ENCODE measurements at regions of chr11 and their contacts with region 1.

Region 1: GRCh38 chr11:125022551-125022950 is 40.6 kb upstream of the SLC37A2 start:
- DNase-seq: no peak
- ATAC-seq: no peak
- H3K4me3 ChIP-seq: no peak overlapping the region
- H3K27ac ChIP-seq: no peak overlapping the region
- H3K4me1 ChIP-seq: no peaks in the 10 kb centered on the region
- H3K27me3 ChIP-seq: no peaks in the 10 kb centered on the region
- CTCF ChIP-seq: no peak

Region 2: DNA sequence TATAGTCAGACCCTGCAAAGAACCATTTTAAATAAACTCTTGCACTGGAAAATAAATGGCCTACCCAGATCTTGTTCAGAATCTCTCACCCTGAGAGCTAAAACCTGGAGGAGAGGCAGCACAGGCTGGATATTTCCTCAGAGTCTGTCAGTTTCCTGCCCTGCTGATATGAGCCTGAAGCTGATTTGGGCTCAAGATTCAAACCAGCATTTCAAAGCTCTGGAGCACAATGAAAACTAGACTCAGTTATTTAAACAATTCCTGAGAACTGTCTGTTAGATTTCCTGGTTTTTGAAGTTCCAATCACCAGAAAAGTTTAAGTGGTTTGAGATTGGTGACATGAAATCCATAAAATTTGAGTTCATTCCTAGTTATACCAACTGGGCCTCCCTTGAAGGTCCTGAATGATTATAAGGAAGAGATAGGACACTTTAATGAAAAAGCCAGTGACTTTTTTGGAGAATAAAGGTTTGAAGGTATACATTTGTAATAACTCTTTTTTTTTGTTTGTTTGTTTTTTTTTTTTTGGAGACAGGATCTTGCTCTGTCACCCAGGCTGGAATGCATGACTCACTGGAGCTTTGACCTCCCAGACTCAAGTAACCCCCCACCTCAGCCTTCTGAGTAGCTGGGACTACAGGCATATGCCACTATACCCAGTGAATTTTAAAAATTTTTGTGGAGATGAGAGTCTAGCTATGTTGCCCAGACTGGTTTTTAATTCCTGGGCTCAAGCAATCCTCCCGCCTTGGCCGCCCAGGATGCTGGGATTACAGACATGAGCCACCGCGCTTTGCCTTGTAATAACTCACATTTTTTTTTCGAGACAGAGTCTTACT is 252.5 kb before region 1 on chr11:
- CTCF ChIA-PET with region 1: no interaction called
- POLR2A ChIA-PET with region 1: interaction called, 18 read pairs
- in situ Hi-C with region 1: no loop called
- intact Hi-C with region 1: no loop called
- DNase-seq: no peak
- ATAC-seq: peak; percentile 81
- H3K4me3 ChIP-seq: no peak overlapping the region
- H3K27ac ChIP-seq: no peak overlapping the region
- H3K4me1 ChIP-seq: no peaks in the 10 kb centered on the region
- H3K27me3 ChIP-seq: no peaks in the 10 kb centered on the region
- CTCF ChIP-seq: no peak

Measured in Panc1 (cell line).